B cell (primary cell): ENCODE measurements at regions of chr11 and their contacts with region 1.

Region 1: DNA sequence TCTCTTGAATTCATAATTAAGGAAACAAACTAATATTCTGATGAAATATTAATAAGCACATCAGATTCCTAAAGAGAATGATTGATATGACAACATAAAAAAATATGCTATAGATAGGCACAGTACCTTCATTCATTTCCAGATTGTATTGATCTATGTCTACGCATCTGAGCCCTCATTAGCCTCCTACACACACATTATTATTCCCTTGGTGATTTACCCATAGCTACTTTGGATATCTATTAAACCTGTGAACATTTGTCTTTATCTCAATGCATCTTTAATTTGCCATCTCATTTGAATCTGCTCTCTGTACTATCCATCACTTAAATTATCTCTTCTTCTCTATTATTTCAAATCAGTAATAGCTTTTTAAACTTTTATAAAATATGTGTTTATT is 18.4 kb downstream of the SESN3 start:
- DNase-seq: no peak
- ATAC-seq: no peak
- H3K4me3 ChIP-seq: no peak overlapping the region
- H3K4me3 Mint-ChIP-seq: no peak overlapping the region
- H3K27ac ChIP-seq: no peak overlapping the region
- H3K27ac Mint-ChIP-seq: no peak overlapping the region
- H3K4me1 ChIP-seq: peaks cover 13 to 23% of the 10 kb centered on the region in 2 donors
- H3K4me1 Mint-ChIP-seq: peaks cover 45% of the 10 kb centered on the region
- H3K27me3 ChIP-seq: no peaks in the 10 kb centered on the region
- H3K27me3 Mint-ChIP-seq: no peaks in the 10 kb centered on the region
- CTCF ChIP-seq: no peak

Region 2: GRCh38 chr11:95014184-95014821 is 198.3 kb before region 1 on chr11:
- CTCF ChIA-PET with region 1: no interaction called
- POLR2A ChIA-PET with region 1: no interaction called
- intact Hi-C with region 1: no loop called
- DNase-seq: no peak
- ATAC-seq: no peak
- H3K4me3 ChIP-seq: no peak overlapping the region
- H3K4me3 Mint-ChIP-seq: no peak overlapping the region
- H3K27ac ChIP-seq: no peak overlapping the region
- H3K27ac Mint-ChIP-seq: no peak overlapping the region
- H3K4me1 ChIP-seq: no peaks in the 10 kb centered on the region
- H3K4me1 Mint-ChIP-seq: no peaks in the 10 kb centered on the region
- H3K27me3 ChIP-seq: peaks cover 0 to 9% (median 4%) of the 10 kb centered on the region in 4 experiments
- H3K27me3 Mint-ChIP-seq: peaks cover 22% of the 10 kb centered on the region
- CTCF ChIP-seq: no peak

Region 3: GRCh38 chr11:95175818-95176368 is 36.7 kb before region 1 on chr11:
- CTCF ChIA-PET with region 1: no interaction called
- POLR2A ChIA-PET with region 1: no interaction called
- intact Hi-C with region 1: loop called (anchors 5 kb)
- DNase-seq: no peak
- ATAC-seq: no peak
- H3K4me3 ChIP-seq: no peak overlapping the region
- H3K4me3 Mint-ChIP-seq: no peak overlapping the region
- H3K27ac ChIP-seq: no peak overlapping the region
- H3K27ac Mint-ChIP-seq: no peak overlapping the region
- H3K4me1 ChIP-seq: no peaks in the 10 kb centered on the region
- H3K4me1 Mint-ChIP-seq: no peaks in the 10 kb centered on the region
- H3K27me3 ChIP-seq: no peaks in the 10 kb centered on the region
- H3K27me3 Mint-ChIP-seq: no peaks in the 10 kb centered on the region
- CTCF ChIP-seq: no peak

Region 4: DNA sequence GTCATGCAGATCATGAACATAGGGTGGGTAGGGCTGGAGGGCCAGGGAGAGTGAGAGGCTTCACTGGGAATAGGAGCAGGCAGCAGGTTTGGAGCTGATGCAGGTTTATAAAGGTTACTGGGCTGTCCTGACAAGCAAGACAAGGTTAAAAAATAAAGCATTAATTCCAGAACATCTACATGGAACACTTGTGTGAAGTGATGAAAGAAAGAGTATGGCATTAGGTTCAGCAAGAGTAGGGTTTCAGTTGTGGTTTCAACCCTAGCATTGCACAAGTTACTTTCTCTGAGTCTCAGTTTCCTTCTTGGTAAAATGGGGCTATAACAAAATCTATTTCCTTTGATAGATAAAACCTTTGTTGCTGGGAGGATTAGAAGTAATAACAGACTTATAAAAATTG is 133.0 kb after region 1 on chr11:
- CTCF ChIA-PET with region 1: no interaction called
- POLR2A ChIA-PET with region 1: no interaction called
- intact Hi-C with region 1: no loop called
- DNase-seq: no peak
- ATAC-seq: no peak
- H3K4me3 ChIP-seq: no peak overlapping the region
- H3K4me3 Mint-ChIP-seq: no peak overlapping the region
- H3K27ac ChIP-seq: no peak overlapping the region
- H3K27ac Mint-ChIP-seq: no peak overlapping the region
- H3K4me1 ChIP-seq: no peaks in the 10 kb centered on the region
- H3K4me1 Mint-ChIP-seq: no peaks in the 10 kb centered on the region
- H3K27me3 ChIP-seq: no peaks in the 10 kb centered on the region
- H3K27me3 Mint-ChIP-seq: no peaks in the 10 kb centered on the region
- CTCF ChIP-seq: no peak

Region 5: GRCh38 chr11:95821640-95822039 is 609.0 kb after region 1 on chr11:
- CTCF ChIA-PET with region 1: no interaction called
- POLR2A ChIA-PET with region 1: no interaction called
- intact Hi-C with region 1: no loop called
- DNase-seq: no peak
- ATAC-seq: no peak
- H3K4me3 ChIP-seq: no peak overlapping the region
- H3K4me3 Mint-ChIP-seq: no peak overlapping the region
- H3K27ac ChIP-seq: no peak overlapping the region
- H3K27ac Mint-ChIP-seq: no peak overlapping the region
- H3K4me1 ChIP-seq: no peaks in the 10 kb centered on the region
- H3K4me1 Mint-ChIP-seq: no peaks in the 10 kb centered on the region
- H3K27me3 ChIP-seq: no peaks in the 10 kb centered on the region
- H3K27me3 Mint-ChIP-seq: no peaks in the 10 kb centered on the region
- CTCF ChIP-seq: no peak